SK-N-SH (cell line): ENCODE measurements at regions of chr4 and their contacts with region 1.

Region 1: DNA sequence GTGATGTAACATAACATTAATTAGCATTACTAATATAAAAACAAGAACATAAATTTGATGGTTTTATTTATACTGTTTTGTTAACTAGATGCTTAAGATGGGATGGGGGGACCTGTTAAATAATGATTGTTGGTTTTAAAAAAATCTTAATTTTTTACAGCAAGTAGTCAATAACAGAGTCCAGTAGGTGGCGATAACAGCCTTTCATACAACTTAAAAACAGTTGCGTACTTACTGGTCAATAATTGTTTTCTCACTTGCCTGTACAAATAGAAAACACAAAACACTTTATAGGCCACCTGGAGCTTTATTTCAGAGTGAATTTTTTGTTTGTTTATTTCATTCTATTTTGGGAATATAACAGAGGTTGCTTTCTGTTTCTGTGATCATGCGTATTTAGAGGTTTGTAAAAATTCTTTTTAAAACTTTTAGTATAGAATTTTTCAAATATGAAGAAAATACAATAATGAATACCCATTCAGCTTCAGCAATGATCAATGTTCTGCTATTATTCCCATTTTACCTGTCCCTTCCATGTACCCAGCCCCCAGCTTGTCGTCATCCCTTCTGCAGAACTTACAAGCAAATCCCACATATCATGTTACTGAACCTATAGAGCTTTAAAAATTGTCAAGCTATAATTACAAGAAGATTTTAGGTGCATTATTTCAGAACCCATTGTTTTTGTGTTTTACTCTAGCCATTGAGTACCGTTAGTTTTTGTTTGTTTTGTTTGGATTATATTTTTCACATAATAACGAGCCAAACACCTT is 97.1 kb downstream of the MRPL1 start:
- DNase-seq: peak; percentile 37
- H3K4me3 ChIP-seq: no peak overlapping the region; a peak in 1 of 4 replicates
- H3K27ac ChIP-seq: no peak overlapping the region
- H3K4me1 ChIP-seq: no peaks in the 10 kb centered on the region
- H3K27me3 ChIP-seq: no peaks in the 10 kb centered on the region
- CTCF ChIP-seq: peak; percentile 88
- EP300 ChIP-seq: no peak
- RAD21 ChIP-seq: peak; percentile 90

Region 2: DNA sequence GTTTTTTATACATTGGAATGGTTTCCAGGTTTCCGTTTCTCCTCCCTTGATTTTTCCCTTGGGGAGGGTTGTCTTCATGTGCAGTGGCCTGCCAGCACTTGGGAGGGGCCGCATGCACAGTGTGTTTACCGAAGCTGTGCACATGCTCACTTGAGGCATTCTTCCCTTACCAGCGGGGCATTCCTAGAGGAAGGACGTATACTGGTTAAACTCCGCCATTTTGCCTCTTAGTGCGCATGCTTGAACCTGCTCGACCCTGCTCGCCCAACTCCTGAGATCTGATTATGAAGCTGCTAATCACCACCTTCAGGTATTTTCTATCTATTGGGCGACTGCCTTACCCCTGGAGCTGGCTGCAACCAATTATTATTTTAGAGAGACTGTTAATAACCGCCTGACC is 278.0 kb before region 1 on chr4:
- CTCF ChIA-PET with region 1: no interaction called
- POLR2A ChIA-PET with region 1: no interaction called
- DNase-seq: no peak
- H3K4me3 ChIP-seq: no peak overlapping the region
- H3K27ac ChIP-seq: no peak overlapping the region
- H3K4me1 ChIP-seq: no peaks in the 10 kb centered on the region
- H3K27me3 ChIP-seq: no peaks in the 10 kb centered on the region
- CTCF ChIP-seq: no peak
- EP300 ChIP-seq: no peak
- RAD21 ChIP-seq: no peak

Region 3: GRCh38 chr4:77695774-77696173 is 264.0 kb before region 1 on chr4:
- CTCF ChIA-PET with region 1: no interaction called
- POLR2A ChIA-PET with region 1: no interaction called
- DNase-seq: no peak
- H3K4me3 ChIP-seq: no peak overlapping the region
- H3K27ac ChIP-seq: peak overlapping the region in 1 of 2 experiments; percentile 38; a peak in 2 of 4 replicates
- H3K4me1 ChIP-seq: peaks cover 10 to 13% of the 10 kb centered on the region in 2 experiments; a peak in 2 of 4 replicates
- H3K27me3 ChIP-seq: no peaks in the 10 kb centered on the region
- CTCF ChIP-seq: no peak
- EP300 ChIP-seq: peak in 1 of 2 experiments; percentile 76; a peak in 2 of 4 replicates
- RAD21 ChIP-seq: no peak

Region 4: GRCh38 chr4:77994194-77994721 is 34.5 kb after region 1 on chr4:
- CTCF ChIA-PET with region 1: interaction called, 18 read pairs
- POLR2A ChIA-PET with region 1: no interaction called
- DNase-seq: peak; percentile 57
- H3K4me3 ChIP-seq: no peak overlapping the region; a peak in 1 of 4 replicates
- H3K27ac ChIP-seq: peak overlapping the region in 1 of 2 experiments; percentile 53; a peak in 1 of 4 replicates
- H3K4me1 ChIP-seq: peaks cover 0 to 35% of the 10 kb centered on the region in 2 experiments; a peak in 2 of 4 replicates
- H3K27me3 ChIP-seq: no peaks in the 10 kb centered on the region
- CTCF ChIP-seq: peak; percentile 79
- EP300 ChIP-seq: peak in 1 of 2 experiments; percentile 29; a peak in 1 of 4 replicates
- RAD21 ChIP-seq: peak; percentile 71

Region 5: DNA sequence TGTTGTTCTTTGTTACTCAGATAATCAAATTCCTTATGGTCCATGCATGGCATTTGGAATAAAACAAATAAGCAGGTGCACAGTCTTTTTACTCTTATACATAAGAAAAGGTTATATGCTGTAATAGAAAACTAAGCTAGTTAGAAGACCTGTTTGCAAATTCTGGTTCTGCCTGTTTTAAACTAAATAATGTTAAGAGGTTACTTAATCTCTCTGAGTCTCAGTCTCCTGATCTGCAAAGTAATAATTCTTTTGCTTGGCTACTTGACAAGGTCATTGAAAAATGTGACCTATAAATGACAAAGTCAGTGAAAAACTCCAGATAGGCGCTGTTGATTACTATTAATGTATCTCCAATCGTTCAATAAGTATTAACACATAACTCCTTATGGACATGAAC is 549.3 kb after region 1 on chr4:
- CTCF ChIA-PET with region 1: interaction called, 36 read pairs
- POLR2A ChIA-PET with region 1: no interaction called
- DNase-seq: no peak
- H3K4me3 ChIP-seq: no peak overlapping the region
- H3K27ac ChIP-seq: peak overlapping the region in 1 of 2 experiments; percentile 68; a peak in 2 of 4 replicates
- H3K4me1 ChIP-seq: no peaks in the 10 kb centered on the region; a peak in 2 of 4 replicates
- H3K27me3 ChIP-seq: no peaks in the 10 kb centered on the region
- CTCF ChIP-seq: no peak
- EP300 ChIP-seq: no peak
- RAD21 ChIP-seq: no peak

Region 6: DNA sequence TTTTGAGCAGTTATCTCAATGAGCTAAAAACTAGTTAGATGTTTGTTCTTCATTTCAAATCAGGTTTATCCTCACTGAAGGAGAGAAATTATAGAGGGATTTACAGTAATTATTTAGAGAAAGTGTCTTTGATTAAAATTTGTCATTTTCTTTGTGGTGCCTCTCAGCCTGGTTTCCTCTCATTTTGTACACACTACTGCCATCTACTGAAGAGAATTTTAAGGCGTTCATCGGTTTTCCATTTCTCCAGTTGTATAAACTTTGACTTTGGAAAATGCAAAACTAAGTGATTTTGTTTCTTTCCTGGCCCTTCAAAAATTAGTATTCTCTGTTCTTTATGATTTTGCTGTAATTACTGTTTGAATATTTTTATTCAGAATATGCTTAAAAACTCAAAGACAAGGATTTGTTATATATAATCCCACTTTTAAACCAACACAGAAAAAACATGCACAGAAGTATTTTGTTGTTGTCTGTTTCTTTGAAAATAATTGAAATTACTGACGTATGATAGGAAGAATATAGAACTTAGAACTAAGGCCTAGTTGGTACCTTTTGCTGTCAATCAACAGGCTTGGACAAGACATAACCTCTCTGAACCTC is 557.4 kb after region 1 on chr4:
- CTCF ChIA-PET with region 1: interaction called, 36 read pairs
- POLR2A ChIA-PET with region 1: no interaction called
- DNase-seq: peak; percentile 33
- H3K4me3 ChIP-seq: peak overlapping the region in 1 of 2 experiments; percentile 23; a peak in 1 of 4 replicates
- H3K27ac ChIP-seq: no peak overlapping the region
- H3K4me1 ChIP-seq: no peaks in the 10 kb centered on the region; a peak in 2 of 4 replicates
- H3K27me3 ChIP-seq: no peaks in the 10 kb centered on the region
- CTCF ChIP-seq: peak; percentile 86
- EP300 ChIP-seq: no peak
- RAD21 ChIP-seq: peak; percentile 90

Region 7: DNA sequence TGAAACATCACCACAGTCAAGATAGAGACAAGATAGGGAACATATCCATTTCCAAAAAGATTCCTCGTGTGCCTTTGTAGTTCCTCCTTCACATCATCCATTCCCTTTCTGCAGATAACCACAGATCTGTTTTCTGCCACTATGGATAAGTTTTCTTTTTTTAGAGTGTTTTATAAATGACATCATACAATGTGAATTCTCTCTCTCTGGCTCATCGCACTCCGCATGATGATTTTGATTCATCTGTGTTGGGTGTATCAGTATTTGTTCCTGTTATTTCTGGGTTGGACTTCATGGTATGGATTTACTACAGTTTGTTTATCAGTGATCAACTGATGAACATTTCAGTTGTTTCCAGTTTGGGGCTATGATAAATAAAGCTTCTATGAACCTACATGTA is 568.6 kb after region 1 on chr4:
- CTCF ChIA-PET with region 1: interaction called, 11 read pairs
- POLR2A ChIA-PET with region 1: no interaction called
- DNase-seq: no peak
- H3K4me3 ChIP-seq: no peak overlapping the region
- H3K27ac ChIP-seq: peak overlapping the region in 1 of 2 experiments; percentile 51; a peak in 3 of 4 replicates
- H3K4me1 ChIP-seq: peaks cover 0 to 12% of the 10 kb centered on the region in 2 experiments; a peak in 1 of 4 replicates
- H3K27me3 ChIP-seq: no peaks in the 10 kb centered on the region
- CTCF ChIP-seq: no peak
- EP300 ChIP-seq: peak in 1 of 2 experiments; percentile 51; a peak in 1 of 4 replicates
- RAD21 ChIP-seq: no peak